Naive thymus-derived CD4-positive, alpha-beta T cell (primary cell): ENCODE measurements at regions of chr9 and their contacts with region 1.

Region 1: GRCh38 chr9:3498691-3499090 is 27.1 kb downstream of the RFX3 start:
- DNase-seq: no peak
- ATAC-seq: no peak
- H3K4me3 ChIP-seq: no peak overlapping the region
- H3K4me3 Mint-ChIP-seq: no peak overlapping the region
- H3K27ac ChIP-seq: no peak overlapping the region
- H3K27ac Mint-ChIP-seq: no peak overlapping the region
- H3K4me1 ChIP-seq: no peaks in the 10 kb centered on the region
- H3K4me1 Mint-ChIP-seq: peaks cover 4 to 44% (median 25%) of the 10 kb centered on the region in 7 donors
- H3K27me3 ChIP-seq: no peaks in the 10 kb centered on the region
- H3K27me3 Mint-ChIP-seq: no peaks in the 10 kb centered on the region

Region 2: DNA sequence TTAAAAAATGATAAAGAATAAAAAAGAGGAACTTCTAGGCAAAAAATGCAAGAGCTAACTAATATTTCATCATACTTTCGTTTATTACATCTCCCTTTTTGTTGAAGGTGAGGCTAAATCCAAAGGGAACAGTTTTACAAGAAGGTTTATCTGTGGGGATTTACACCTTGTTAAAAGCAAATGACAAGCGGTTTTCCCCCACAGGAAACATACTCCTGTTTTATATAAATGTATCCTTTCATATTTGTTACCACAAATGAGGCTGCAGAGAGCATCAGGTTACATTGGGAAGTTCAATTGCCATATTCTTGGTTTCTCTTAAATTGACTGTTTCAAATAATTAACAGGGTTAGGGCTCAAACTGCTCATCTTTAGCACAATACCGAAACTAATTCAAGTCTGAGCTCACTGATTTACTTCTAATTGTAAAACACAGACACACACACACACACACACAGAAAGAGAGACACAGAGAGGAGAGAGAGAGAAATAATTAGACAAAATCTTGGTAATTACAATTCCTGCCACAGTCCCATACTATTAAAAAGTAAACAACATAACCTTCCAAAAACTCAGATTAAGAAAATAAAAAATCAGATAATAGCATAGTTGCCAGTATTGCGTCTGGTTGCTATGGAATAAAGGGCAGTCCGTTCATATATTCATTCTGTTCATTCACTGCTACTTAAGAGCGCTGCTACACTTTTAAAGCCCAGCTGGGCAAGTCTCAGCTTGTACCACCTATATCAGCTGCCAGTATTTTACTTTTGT is 10.0 kb after region 1 on chr9:
- CTCF ChIA-PET with region 1: no interaction called
- POLR2A ChIA-PET with region 1: no interaction called
- intact Hi-C with region 1: loop called in 1 of 2 experiments (anchors 1 kb)
- DNase-seq: no peak
- ATAC-seq: no peak
- H3K4me3 ChIP-seq: no peak overlapping the region
- H3K4me3 Mint-ChIP-seq: peak overlapping the region in 8 of 10 donors; percentile 6 to 66 (median 38)
- H3K27ac ChIP-seq: no peak overlapping the region
- H3K27ac Mint-ChIP-seq: peak overlapping the region in 5 of 9 donors; percentile 24 to 83 (median 76)
- H3K4me1 ChIP-seq: peaks cover 0 to 12% of the 10 kb centered on the region in 2 donors
- H3K4me1 Mint-ChIP-seq: peaks cover 23 to 62% (median 41%) of the 10 kb centered on the region in 7 donors
- H3K27me3 ChIP-seq: no peaks in the 10 kb centered on the region
- H3K27me3 Mint-ChIP-seq: no peaks in the 10 kb centered on the region

Region 3: DNA sequence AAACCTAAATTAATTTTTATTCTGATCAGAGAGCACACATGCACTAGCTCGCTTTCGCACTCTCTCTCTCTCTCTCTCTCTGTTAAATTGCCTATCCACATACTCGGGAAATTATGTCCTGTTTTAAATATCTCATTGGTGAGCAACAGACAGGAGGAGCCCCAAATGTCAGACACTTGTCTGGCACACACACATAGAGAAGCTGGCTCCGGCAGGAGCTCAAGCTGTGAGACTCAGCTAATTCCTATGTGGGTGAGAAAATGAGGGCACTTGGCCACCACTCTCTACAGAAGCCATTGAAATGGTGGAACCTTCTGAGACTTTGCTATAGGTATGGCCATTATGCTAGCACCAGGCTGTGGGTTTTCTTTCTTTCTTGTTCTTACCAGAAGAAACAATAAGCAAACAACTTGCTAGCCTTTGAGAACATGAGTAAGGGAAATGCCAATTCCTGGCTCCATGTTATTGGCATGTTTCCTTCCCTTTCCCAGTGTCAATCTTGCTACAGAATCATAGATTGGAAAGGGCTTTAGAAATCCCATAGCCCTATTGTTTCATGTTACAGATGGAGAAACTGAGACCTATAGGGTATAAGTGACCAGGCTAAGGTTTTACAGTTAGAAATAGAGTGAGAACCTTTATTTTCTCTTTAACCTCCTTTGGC is 18.1 kb after region 1 on chr9:
- CTCF ChIA-PET with region 1: no interaction called
- POLR2A ChIA-PET with region 1: no interaction called
- intact Hi-C with region 1: loop called in 1 of 2 experiments (anchors 1 kb)
- DNase-seq: no peak
- ATAC-seq: peak; percentile 22
- H3K4me3 ChIP-seq: no peak overlapping the region
- H3K4me3 Mint-ChIP-seq: no peak overlapping the region
- H3K27ac ChIP-seq: no peak overlapping the region
- H3K27ac Mint-ChIP-seq: peak overlapping the region in 1 of 9 donors; percentile 29
- H3K4me1 ChIP-seq: peaks cover 0 to 6% of the 10 kb centered on the region in 2 donors
- H3K4me1 Mint-ChIP-seq: peaks cover 6 to 43% (median 34%) of the 10 kb centered on the region in 7 donors
- H3K27me3 ChIP-seq: no peaks in the 10 kb centered on the region
- H3K27me3 Mint-ChIP-seq: no peaks in the 10 kb centered on the region

Region 4: GRCh38 chr9:3647652-3648051 is 149.0 kb after region 1 on chr9:
- CTCF ChIA-PET with region 1: no interaction called
- POLR2A ChIA-PET with region 1: no interaction called
- intact Hi-C with region 1: no loop called
- DNase-seq: peak in 4 of 9 donors; percentile 1 to 18 (median 3)
- ATAC-seq: no peak
- H3K4me3 ChIP-seq: no peak overlapping the region
- H3K4me3 Mint-ChIP-seq: no peak overlapping the region
- H3K27ac ChIP-seq: no peak overlapping the region
- H3K27ac Mint-ChIP-seq: no peak overlapping the region
- H3K4me1 ChIP-seq: no peaks in the 10 kb centered on the region
- H3K4me1 Mint-ChIP-seq: no peaks in the 10 kb centered on the region
- H3K27me3 ChIP-seq: no peaks in the 10 kb centered on the region
- H3K27me3 Mint-ChIP-seq: no peaks in the 10 kb centered on the region

Region 5: GRCh38 chr9:4048441-4048840 is 549.8 kb after region 1 on chr9:
- CTCF ChIA-PET with region 1: no interaction called
- POLR2A ChIA-PET with region 1: no interaction called
- intact Hi-C with region 1: no loop called
- DNase-seq: no peak
- ATAC-seq: no peak
- H3K4me3 ChIP-seq: no peak overlapping the region
- H3K4me3 Mint-ChIP-seq: no peak overlapping the region
- H3K27ac ChIP-seq: no peak overlapping the region
- H3K27ac Mint-ChIP-seq: no peak overlapping the region
- H3K4me1 ChIP-seq: no peaks in the 10 kb centered on the region
- H3K4me1 Mint-ChIP-seq: no peaks in the 10 kb centered on the region
- H3K27me3 ChIP-seq: no peaks in the 10 kb centered on the region
- H3K27me3 Mint-ChIP-seq: peaks cover 0 to 7% (median 0%) of the 10 kb centered on the region in 5 donors

Region 6: GRCh38 chr9:4143936-4144717 is 645.4 kb after region 1 on chr9:
- CTCF ChIA-PET with region 1: no interaction called
- POLR2A ChIA-PET with region 1: no interaction called
- intact Hi-C with region 1: no loop called
- DNase-seq: no peak
- ATAC-seq: no peak
- H3K4me3 ChIP-seq: no peak overlapping the region
- H3K4me3 Mint-ChIP-seq: no peak overlapping the region
- H3K27ac ChIP-seq: no peak overlapping the region
- H3K27ac Mint-ChIP-seq: no peak overlapping the region
- H3K4me1 ChIP-seq: no peaks in the 10 kb centered on the region
- H3K4me1 Mint-ChIP-seq: peaks cover 0 to 12% (median 0%) of the 10 kb centered on the region in 7 donors
- H3K27me3 ChIP-seq: no peaks in the 10 kb centered on the region
- H3K27me3 Mint-ChIP-seq: peaks cover 4 to 21% (median 13%) of the 10 kb centered on the region in 5 donors